Activated CD4-positive, alpha-beta T cell treated with anti-CD3 and anti-CD28 coated beads for 36 hours (primary cell): ENCODE measurements at regions of chr19 and their contacts with region 1.

Region 1: DNA sequence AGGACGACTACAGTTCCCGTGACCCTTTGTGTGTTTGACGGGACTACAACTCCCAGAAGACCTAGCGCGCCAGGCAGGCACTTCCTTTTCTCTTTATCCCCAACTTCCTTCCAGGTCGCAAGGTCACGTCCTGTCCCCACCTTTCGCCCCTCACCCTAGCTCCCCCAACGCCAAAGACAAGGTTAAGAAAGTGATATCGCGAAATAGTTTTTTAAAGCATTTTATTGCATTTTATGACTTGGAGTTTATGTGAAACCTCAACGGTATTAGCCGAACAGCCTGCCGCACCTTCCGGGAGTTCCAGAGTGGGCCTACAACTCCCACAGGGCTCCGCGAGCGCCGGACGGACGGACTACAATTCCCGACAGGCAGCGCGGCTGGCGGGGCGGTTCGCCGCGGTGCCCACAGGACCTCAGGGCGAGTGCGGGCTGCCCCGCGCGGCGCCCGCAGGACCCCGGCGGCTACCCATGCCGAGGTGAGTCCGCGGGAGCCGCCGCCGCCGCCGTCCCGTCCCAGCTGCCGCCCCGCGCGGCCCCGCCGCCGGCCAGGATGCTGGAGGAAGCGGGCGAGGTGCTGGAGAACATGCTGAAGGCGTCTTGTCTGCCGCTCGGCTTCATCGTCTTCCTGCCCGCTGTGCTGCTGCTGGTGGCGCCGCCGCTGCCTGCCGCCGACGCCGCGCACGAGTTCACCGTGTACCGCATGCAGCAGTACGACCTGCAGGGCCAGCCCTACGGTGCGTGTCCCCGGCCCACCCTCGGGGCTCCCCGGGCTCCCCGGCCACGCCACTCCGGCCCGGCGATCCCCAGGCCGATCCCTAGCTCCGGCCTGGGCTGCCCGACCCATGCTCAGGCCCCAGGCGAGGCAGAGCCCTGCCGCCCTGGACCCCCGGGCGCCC is at the start of gene NCLN:
- DNase-seq: peak; percentile 97
- ATAC-seq: peak; percentile 86
- H3K4me3 Mint-ChIP-seq: peak within 1 kb of the TSS; percentile 83
- H3K27ac Mint-ChIP-seq: peak within 1 kb of the TSS; percentile 94
- H3K4me1 Mint-ChIP-seq: peaks cover 56% of the 10 kb centered on the region
- H3K27me3 Mint-ChIP-seq: no peaks in the 10 kb centered on the region
- total RNA-seq, gene NCLN: 55.6 to 58.2 TPM

Region 2: DNA sequence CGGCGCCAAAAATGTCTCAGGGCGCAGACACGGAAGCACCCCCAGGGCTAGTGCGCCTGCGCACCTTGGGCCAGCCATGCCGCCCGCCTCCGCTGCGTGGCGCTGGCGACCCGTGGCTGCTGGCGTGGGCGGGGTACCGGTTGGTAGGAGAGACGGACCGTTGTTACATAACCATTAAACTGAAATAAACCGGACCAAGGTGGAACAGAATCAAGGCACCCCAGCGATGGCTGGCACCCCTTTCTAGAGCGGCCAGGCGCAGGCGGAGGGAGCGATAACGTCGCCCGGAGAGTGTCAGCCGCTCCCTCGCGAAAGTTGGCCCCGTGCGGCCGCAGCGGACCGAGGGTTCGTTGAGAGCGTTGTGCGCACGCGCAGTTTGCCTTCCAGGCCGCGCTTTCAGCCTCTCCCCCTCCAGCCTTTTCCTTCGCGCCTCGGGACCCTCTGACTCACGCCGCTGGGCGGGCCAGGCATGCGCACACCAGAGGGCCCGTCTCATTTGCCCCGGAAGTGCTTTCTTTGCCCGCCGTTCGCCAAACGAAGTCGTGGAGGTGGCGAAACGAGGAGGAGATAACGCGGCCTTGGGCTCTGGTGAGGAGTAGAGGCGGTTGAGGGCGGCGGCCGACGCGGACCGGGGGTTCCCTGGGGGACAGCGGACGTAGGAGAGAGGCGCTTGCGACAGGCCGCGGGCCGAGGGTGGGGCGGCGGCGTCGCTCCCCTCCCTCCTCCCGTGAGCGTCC is 949.2 kb before region 1 on chr19 and contains the starts of genes PLEKHJ1 and SF3A2:
- CTCF ChIA-PET with region 1: no interaction called
- POLR2A ChIA-PET with region 1: no interaction called
- intact Hi-C with region 1: loop called in 1 of 2 experiments (anchors 1 kb)
- DNase-seq: peak; percentile 99
- ATAC-seq: peak; percentile 87
- H3K4me3 Mint-ChIP-seq: peak within 1 kb of the TSS; percentile 94
- H3K27ac Mint-ChIP-seq: peak within 1 kb of the TSS; percentile 97
- H3K4me1 Mint-ChIP-seq: peaks cover 52% of the 10 kb centered on the region
- H3K27me3 Mint-ChIP-seq: no peaks in the 10 kb centered on the region
- total RNA-seq, gene PLEKHJ1: 38.4 to 61.8 TPM
- total RNA-seq, gene SF3A2: 146 to 192 TPM

Region 3: GRCh38 chr19:2900296-2901252 is 285.2 kb before region 1 on chr19 and contains the start of gene ZNF57:
- CTCF ChIA-PET with region 1: interaction called, 3 read pairs
- POLR2A ChIA-PET with region 1: no interaction called
- intact Hi-C with region 1: loop called in 1 of 2 experiments (anchors 1 kb)
- DNase-seq: peak; percentile 100
- ATAC-seq: peak; percentile 99
- H3K4me3 Mint-ChIP-seq: peak within 1 kb of the TSS; percentile 98
- H3K27ac Mint-ChIP-seq: peak within 1 kb of the TSS; percentile 96
- H3K4me1 Mint-ChIP-seq: peaks cover 18% of the 10 kb centered on the region
- H3K27me3 Mint-ChIP-seq: no peaks in the 10 kb centered on the region
- total RNA-seq, gene ZNF57: 5.9 to 7.1 TPM

Region 4: GRCh38 chr19:3062168-3063102 is 123.3 kb before region 1 on chr19 and contains the start of gene TLE5:
- CTCF ChIA-PET with region 1: no interaction called
- POLR2A ChIA-PET with region 1: no interaction called
- intact Hi-C with region 1: loop called in 1 of 2 experiments (anchors 1 kb)
- DNase-seq: peak; percentile 83
- ATAC-seq: peak; percentile 71
- H3K4me3 Mint-ChIP-seq: peak within 1 kb of the TSS; percentile 82
- H3K27ac Mint-ChIP-seq: peak within 1 kb of the TSS; percentile 97
- H3K4me1 Mint-ChIP-seq: peaks cover 35% of the 10 kb centered on the region
- H3K27me3 Mint-ChIP-seq: no peaks in the 10 kb centered on the region
- total RNA-seq, gene TLE5: 349 to 533 TPM

Region 5: GRCh38 chr19:3210347-3211017 is 24.8 kb after region 1 on chr19:
- CTCF ChIA-PET with region 1: no interaction called
- POLR2A ChIA-PET with region 1: no interaction called
- intact Hi-C with region 1: loop called in 1 of 2 experiments (anchors 2 kb)
- DNase-seq: peak; percentile 86
- ATAC-seq: peak; percentile 98
- H3K4me3 Mint-ChIP-seq: no peak overlapping the region
- H3K27ac Mint-ChIP-seq: no peak overlapping the region
- H3K4me1 Mint-ChIP-seq: no peaks in the 10 kb centered on the region
- H3K27me3 Mint-ChIP-seq: no peaks in the 10 kb centered on the region

Region 6: DNA sequence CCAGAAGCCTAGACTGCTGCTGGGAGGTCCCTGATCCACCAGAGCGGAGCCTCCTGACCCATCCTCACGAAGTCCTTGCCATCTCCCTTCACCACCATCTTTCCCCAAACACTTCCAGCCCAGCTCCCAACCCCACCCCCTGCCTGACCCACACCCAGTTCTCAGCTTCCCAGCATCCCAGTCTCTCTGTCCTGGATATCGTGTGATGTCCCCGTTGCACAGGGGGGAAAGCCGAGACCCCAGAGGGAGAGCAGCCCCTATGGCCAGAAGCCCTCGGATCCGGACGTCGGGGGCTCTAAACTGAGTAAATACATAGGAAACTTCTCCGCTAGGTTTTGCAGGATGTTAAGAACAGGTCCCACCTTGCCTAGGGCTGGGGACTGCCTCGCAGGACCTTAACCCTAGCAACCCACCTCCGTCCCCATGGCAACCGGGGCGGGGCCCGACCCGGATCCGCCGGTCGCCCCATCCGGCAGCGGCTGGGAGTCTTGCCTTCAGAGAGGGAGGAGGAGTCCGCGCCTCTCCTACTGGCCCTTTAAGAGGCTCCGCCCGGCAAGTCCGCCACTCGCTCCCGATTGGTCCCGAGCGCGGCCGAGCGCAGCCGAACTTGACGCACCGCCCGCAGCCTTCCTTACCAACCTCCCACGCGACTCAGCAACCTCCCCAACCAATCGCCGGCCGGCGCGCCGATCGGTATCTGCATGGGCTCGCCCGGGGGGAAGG is 386.6 kb after region 1 on chr19:
- CTCF ChIA-PET with region 1: no interaction called
- POLR2A ChIA-PET with region 1: no interaction called
- intact Hi-C with region 1: loop called in 1 of 2 experiments (anchors 2 kb)
- DNase-seq: peak; percentile 100
- ATAC-seq: peak; percentile 96
- H3K4me3 Mint-ChIP-seq: peak overlapping the region; percentile 73
- H3K27ac Mint-ChIP-seq: no peak overlapping the region
- H3K4me1 Mint-ChIP-seq: peaks cover 11% of the 10 kb centered on the region
- H3K27me3 Mint-ChIP-seq: no peaks in the 10 kb centered on the region

Region 7: DNA sequence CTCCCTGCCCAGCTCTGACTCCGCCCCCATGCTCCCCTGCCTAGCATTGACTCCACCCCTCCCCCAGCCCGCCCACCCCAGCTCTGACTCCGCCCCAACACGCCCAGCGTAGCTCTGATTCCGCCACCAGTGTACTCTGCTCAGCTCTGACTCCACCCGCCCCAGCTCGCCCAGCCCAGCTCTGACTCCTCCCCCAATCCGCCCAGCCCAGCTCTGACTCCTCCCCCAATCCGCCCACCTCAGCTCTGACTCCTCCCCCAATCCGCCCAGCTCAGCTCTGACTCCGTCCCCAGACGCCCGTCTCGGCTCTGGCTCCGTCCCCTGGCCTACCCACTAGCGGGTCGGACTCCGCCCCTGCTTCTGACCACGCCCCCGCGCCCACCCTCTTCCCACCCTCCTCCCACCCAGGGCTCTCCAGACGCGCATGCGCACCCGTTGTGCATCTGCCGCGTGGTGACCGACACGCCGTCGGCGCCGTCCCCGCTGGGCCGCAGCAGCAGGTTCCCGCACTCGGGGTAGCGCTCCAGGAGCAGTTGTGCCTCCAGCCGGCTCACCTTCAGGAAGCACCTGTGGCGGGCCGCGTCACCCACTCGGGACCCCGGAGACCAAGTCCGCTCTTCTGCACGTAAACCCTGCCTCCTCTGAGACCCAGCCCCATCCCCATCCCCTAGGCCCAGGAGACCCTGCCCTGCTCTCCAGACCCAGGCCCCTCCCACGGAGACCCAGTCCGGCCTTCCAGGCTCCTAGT is 1142.7 kb after region 1 on chr19:
- CTCF ChIA-PET with region 1: no interaction called
- POLR2A ChIA-PET with region 1: no interaction called
- intact Hi-C with region 1: loop called in 1 of 2 experiments (anchors 5 kb)
- DNase-seq: peak; percentile 100
- ATAC-seq: peak; percentile 85
- H3K4me3 Mint-ChIP-seq: peak overlapping the region; percentile 93
- H3K27ac Mint-ChIP-seq: peak overlapping the region; percentile 94
- H3K4me1 Mint-ChIP-seq: peaks cover 27% of the 10 kb centered on the region
- H3K27me3 Mint-ChIP-seq: no peaks in the 10 kb centered on the region